GM10248 (cell line): ENCODE measurements at regions of chr5 and their contacts with region 1.

Region 1: GRCh38 chr5:68711293-68712200 is 382.3 kb upstream of the SLC30A5 start:
- DNase-seq: peak; percentile 51
- CTCF ChIP-seq: no peak

Region 2: DNA sequence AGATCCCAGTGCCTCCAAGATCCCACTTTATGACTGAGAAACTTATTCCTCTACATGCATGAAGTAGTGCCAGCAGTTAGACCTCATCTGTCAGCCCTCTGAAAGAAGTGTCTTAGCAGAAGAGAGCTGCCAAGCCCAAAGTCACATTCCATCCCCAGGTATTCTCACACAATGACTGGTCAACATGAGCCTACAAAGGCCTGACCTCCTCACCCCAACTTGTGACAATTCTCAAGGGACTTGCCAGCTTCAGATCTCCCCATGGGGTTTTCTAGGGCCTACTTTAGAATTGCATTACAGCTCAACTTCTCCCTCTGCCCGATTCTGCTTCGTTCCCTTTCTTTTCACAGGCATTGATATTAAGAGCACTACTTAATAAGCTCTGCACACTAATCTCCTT is 11.6 kb before region 1 on chr5:
- CTCF ChIA-PET with region 1: interaction called, 16 read pairs
- POLR2A ChIA-PET with region 1: no interaction called
- DNase-seq: no peak
- CTCF ChIP-seq: no peak